MCF 10A (cell line): ENCODE measurements at regions of chr2 and their contacts with region 1.

Region 1: DNA sequence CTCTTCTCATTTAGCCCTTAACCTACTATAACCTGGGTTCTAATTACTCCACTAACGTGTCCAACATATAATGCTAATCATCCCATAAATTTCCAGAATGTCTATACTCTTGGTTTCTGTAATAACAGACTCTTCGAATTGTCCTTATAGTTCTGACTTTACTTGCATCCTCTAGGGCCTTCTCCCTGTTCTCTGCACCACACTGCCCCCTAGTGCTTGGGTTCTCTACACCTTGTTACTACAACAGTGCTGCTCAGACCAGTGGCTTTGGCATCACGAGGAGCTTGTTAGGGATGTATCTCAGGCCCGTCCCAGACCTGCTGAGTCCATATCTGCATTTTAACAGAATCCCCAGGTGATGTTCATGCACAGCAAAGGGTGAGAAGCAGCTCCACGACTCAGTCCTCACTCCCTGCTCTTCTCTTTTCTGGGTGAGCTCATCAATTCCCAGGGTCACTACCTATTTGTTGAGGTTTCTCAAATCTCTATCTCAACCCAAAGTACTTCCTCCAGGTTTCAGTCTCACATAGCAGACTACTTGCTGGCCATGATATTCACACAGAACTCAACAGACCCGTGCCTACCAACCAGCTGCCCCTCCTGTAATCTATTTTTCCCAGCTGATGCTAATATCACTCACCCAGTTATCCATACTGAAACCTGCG is 14.5 kb upstream of the DDX1 start:
- DNase-seq: peak; percentile 93
- H3K4me3 Mint-ChIP-seq: no peak overlapping the region
- H3K27ac Mint-ChIP-seq: no peak overlapping the region
- H3K4me1 Mint-ChIP-seq: no peaks in the 10 kb centered on the region
- H3K27me3 Mint-ChIP-seq: no peaks in the 10 kb centered on the region
- CTCF ChIP-seq: peak; percentile 69

Region 2: DNA sequence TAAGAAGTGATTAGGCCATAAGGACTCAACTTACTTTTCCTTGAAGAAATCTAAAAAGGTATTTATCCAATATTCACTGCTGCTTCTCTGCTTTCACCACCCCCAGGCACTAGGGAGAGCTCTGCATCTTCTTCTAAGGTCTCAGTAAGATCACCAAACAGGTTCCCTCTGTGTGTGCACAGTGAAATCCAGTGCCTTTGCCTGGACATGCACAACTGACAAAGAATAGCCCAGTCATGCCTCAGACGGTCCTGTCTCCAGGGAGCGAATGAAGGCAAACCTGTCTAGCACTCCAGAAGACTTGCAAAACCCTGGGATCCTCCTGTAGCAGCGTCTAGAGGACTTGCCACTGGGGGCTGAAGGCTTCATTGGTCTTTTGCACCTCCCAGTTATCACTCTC is 1289.2 kb before region 1 on chr2:
- CTCF ChIA-PET with region 1: interaction called, 6 read pairs
- POLR2A ChIA-PET with region 1: no interaction called
- intact Hi-C with region 1: loop called (anchors 2 kb)
- DNase-seq: peak; percentile 63
- H3K4me3 Mint-ChIP-seq: no peak overlapping the region
- H3K27ac Mint-ChIP-seq: no peak overlapping the region
- H3K4me1 Mint-ChIP-seq: peaks cover 5% of the 10 kb centered on the region
- H3K27me3 Mint-ChIP-seq: no peaks in the 10 kb centered on the region
- CTCF ChIP-seq: no peak

Region 3: GRCh38 chr2:14909795-14910194 is 667.4 kb before region 1 on chr2:
- CTCF ChIA-PET with region 1: interaction called, 3 read pairs
- POLR2A ChIA-PET with region 1: no interaction called
- intact Hi-C with region 1: loop called (anchors 10 kb)
- DNase-seq: no peak
- H3K4me3 Mint-ChIP-seq: no peak overlapping the region
- H3K27ac Mint-ChIP-seq: no peak overlapping the region
- H3K4me1 Mint-ChIP-seq: no peaks in the 10 kb centered on the region
- H3K27me3 Mint-ChIP-seq: no peaks in the 10 kb centered on the region
- CTCF ChIP-seq: no peak

Region 4: GRCh38 chr2:15159751-15160177 is 417.4 kb before region 1 on chr2:
- CTCF ChIA-PET with region 1: interaction called, 4 read pairs
- POLR2A ChIA-PET with region 1: no interaction called
- intact Hi-C with region 1: loop called (anchors 5 kb)
- DNase-seq: peak; percentile 64
- H3K4me3 Mint-ChIP-seq: no peak overlapping the region
- H3K27ac Mint-ChIP-seq: peak overlapping the region; percentile 6
- H3K4me1 Mint-ChIP-seq: peaks cover 6% of the 10 kb centered on the region
- H3K27me3 Mint-ChIP-seq: no peaks in the 10 kb centered on the region
- CTCF ChIP-seq: peak; percentile 47

Region 5: GRCh38 chr2:15591692-15592463 is 14.7 kb after region 1 on chr2 and contains the start of gene DDX1:
- CTCF ChIA-PET with region 1: interaction called, 67 read pairs
- POLR2A ChIA-PET with region 1: interaction called, 5 read pairs
- intact Hi-C with region 1: no loop called
- DNase-seq: peak; percentile 84
- H3K4me3 Mint-ChIP-seq: peak within 1 kb of the TSS; percentile 93
- H3K27ac Mint-ChIP-seq: peak within 1 kb of the TSS; percentile 99
- H3K4me1 Mint-ChIP-seq: peaks cover 11% of the 10 kb centered on the region
- H3K27me3 Mint-ChIP-seq: no peaks in the 10 kb centered on the region
- CTCF ChIP-seq: no peak
- total RNA-seq, gene DDX1: 97.8 and 119 TPM in 2 replicates

Region 6: GRCh38 chr2:16058256-16058655 is 481.1 kb after region 1 on chr2:
- CTCF ChIA-PET with region 1: no interaction called
- POLR2A ChIA-PET with region 1: no interaction called
- intact Hi-C with region 1: no loop called
- DNase-seq: no peak
- H3K4me3 Mint-ChIP-seq: no peak overlapping the region
- H3K27ac Mint-ChIP-seq: no peak overlapping the region
- H3K4me1 Mint-ChIP-seq: no peaks in the 10 kb centered on the region
- H3K27me3 Mint-ChIP-seq: no peaks in the 10 kb centered on the region
- CTCF ChIP-seq: no peak